ENCODE measurements at regions of chr1 and their contacts with region 1.

Region 1: DNA sequence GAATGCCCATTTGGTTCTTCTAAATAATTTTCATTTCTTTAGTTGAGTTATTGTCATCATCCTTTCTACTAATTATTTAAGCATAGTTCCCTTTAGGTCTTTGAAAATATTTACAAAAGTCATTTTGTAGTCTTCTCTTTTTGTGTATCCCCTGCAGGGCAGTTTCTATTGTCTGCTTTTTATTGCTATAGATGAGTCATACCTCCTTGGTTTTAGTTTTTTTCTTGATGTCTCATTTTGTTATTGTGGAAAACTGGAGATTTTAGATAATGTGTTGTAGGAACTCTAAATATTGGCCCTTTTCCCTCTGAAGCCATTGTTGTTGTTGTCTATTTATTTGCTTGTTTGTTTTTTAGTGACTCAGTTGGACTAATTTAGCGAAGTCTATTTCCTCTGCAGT is 387.9 kb downstream of the NUF2 start:
- DNase-seq: no peak
- H3K4me3 ChIP-seq: no peak overlapping the region
- H3K27ac ChIP-seq: no peak overlapping the region
- H3K4me1 ChIP-seq: no peaks in the 10 kb centered on the region
- H3K27me3 ChIP-seq: no peaks in the 10 kb centered on the region
- CTCF ChIP-seq: no peak
- POLR2A ChIP-seq: no peak

Region 2: DNA sequence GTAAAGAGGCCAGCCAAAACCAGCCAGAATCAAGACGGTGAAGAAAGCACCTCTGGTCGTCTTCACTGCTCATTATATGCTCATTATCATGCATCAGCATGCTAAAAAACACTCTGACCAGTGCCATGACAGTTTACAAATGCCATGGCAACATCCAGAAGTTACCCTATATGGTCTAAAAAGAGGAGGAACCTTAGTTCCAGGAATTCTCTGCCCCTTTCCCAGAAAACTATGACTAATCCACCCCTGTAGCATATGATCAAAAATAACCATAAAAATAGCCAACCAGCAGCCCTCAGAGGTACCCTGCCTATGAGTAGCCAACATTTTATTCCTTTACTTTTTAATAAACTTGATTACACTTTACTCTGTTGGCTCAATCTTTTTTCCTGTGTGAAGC is 815.2 kb after region 1 on chr1:
- intact Hi-C with region 1: loop called (anchors 5 kb)
- DNase-seq: no peak
- H3K4me3 ChIP-seq: no peak overlapping the region
- H3K27ac ChIP-seq: no peak overlapping the region
- H3K4me1 ChIP-seq: no peaks in the 10 kb centered on the region
- H3K27me3 ChIP-seq: no peaks in the 10 kb centered on the region
- CTCF ChIP-seq: no peak
- POLR2A ChIP-seq: no peak

Region 3: DNA sequence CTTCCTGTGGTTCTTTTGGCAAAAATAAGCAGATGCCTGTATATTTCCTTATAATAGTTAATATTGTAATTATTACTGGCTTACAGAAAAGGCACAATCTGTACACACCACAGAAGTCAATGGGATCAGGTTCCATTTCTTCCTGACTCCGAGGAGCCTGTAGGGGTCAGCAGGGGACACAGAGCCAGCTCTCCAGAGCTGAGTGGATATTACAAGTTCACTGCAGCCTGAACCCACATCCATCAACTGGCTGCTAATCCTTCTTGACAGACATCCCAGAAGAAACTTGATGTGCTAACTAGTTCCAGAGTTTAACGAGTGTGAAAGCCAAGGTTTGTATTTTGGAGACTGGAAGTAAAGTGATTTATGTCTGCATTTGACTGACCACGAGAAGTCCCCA is 1443.1 kb after region 1 on chr1:
- intact Hi-C with region 1: loop called (anchors 10 kb)
- DNase-seq: no peak
- H3K4me3 ChIP-seq: no peak overlapping the region
- H3K27ac ChIP-seq: no peak overlapping the region
- H3K4me1 ChIP-seq: no peaks in the 10 kb centered on the region
- H3K27me3 ChIP-seq: no peaks in the 10 kb centered on the region
- CTCF ChIP-seq: no peak
- POLR2A ChIP-seq: no peak

Region 4: GRCh38 chr1:165342587-165342986 is 1633.0 kb after region 1 on chr1:
- intact Hi-C with region 1: no loop called
- DNase-seq: no peak
- H3K4me3 ChIP-seq: no peak overlapping the region
- H3K27ac ChIP-seq: no peak overlapping the region
- H3K4me1 ChIP-seq: no peaks in the 10 kb centered on the region
- H3K27me3 ChIP-seq: peaks cover 0 to 18% of the 10 kb centered on the region in 2 donors
- CTCF ChIP-seq: no peak
- POLR2A ChIP-seq: no peak

Measured in breast epithelium (tissue), 4 donors.